WTC11 (cell line): ENCODE measurements at regions of chr2 and their contacts with region 1.

Region 1: GRCh38 chr2:85750587-85751575 is 2.9 kb upstream of the ATOH8 start:
- DNase-seq: peak; percentile 83
- ATAC-seq: peak; percentile 48
- H3K4me3 Mint-ChIP-seq: no peak overlapping the region
- H3K27ac Mint-ChIP-seq: no peak overlapping the region
- H3K4me1 Mint-ChIP-seq: peaks cover 10% of the 10 kb centered on the region
- H3K27me3 Mint-ChIP-seq: peaks cover 53% of the 10 kb centered on the region
- CTCF ChIP-seq: peak; percentile 56

Region 2: GRCh38 chr2:85672456-85672855 is 78.4 kb before region 1 on chr2:
- CTCF ChIA-PET with region 1: no interaction called
- POLR2A ChIA-PET with region 1: no interaction called
- DNase-seq: no peak
- ATAC-seq: no peak
- H3K4me3 Mint-ChIP-seq: no peak overlapping the region
- H3K27ac Mint-ChIP-seq: no peak overlapping the region
- H3K4me1 Mint-ChIP-seq: peaks cover 16% of the 10 kb centered on the region
- H3K27me3 Mint-ChIP-seq: no peaks in the 10 kb centered on the region
- CTCF ChIP-seq: no peak

Region 3: DNA sequence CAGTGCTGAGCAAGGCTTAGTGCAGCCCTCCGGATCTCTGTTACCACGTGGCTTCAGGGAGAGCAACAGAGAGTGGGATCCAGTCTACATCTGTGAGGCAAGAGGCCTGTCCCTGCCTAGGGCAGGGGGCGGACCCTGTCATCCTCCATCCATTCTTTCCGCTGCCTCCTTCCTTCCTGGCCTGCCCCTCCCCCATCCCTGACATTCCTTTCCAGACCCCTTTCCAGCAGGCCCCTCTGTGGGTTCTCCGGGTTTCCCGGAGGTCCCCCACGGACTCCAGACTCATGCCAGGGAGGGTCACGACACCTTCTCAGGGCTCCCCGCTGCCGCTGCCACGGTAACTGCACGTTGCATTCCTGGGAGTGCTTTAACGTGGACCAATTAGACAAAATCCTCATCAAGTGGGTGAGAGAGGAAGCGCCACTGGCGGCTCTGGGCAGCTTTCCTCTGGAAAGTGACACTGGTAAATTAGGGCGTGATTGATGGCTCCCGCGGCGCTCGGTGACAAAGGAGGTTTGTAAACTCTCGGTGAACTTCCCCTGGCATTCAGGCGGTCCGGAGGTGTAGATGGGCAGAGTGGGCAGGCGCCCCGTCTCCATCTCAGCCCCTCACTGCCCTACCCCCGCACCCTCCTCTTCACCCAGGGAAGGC is 14.3 kb after region 1 on chr2:
- CTCF ChIA-PET with region 1: interaction called, 126 read pairs
- POLR2A ChIA-PET with region 1: interaction called, 5 read pairs
- DNase-seq: peak; percentile 63
- ATAC-seq: peak; percentile 52
- H3K4me3 Mint-ChIP-seq: peak overlapping the region; percentile 67
- H3K27ac Mint-ChIP-seq: no peak overlapping the region
- H3K4me1 Mint-ChIP-seq: peaks cover 56% of the 10 kb centered on the region
- H3K27me3 Mint-ChIP-seq: peaks cover 47% of the 10 kb centered on the region
- CTCF ChIP-seq: no peak

Region 4: DNA sequence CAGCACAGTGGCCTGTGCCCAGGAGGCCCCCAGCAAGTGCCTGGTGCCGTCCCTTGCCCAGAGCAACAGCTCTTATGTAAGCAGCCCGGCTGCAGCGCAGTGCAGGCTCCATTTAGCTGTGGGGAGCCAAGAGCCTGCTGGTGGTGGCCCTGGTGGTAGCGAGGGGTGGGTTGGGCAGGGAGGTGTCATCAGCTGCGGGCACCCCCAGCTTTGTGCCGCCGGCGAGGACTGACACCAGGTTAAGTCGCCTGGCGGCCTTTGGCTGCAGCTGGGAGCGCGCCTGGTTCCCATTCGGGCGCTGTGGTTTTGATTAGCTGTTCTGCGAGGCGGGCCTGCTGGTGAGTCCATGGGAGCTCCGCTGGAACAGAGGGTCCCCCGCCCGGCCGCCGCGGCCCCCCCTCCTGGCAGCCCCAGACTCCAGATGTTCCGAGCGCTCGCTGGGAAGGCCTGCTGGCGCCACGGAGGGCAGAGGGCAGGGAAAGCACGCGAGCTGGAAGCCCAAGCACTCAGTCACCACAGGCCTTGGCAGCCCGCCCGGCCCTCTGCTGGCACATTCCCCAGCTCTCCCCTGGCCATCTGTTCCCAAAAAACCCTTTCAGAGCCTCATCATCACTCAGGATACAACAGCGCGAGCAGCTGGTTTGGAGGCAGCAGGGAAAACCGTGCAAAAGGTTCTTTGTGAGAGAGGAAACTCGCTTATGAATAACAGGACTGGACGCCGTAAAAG is 21.3 kb after region 1 on chr2:
- CTCF ChIA-PET with region 1: interaction called, 126 read pairs
- POLR2A ChIA-PET with region 1: interaction called, 3 read pairs
- DNase-seq: peak; percentile 59
- ATAC-seq: peak; percentile 51
- H3K4me3 Mint-ChIP-seq: no peak overlapping the region
- H3K27ac Mint-ChIP-seq: no peak overlapping the region
- H3K4me1 Mint-ChIP-seq: peaks cover 47% of the 10 kb centered on the region
- H3K27me3 Mint-ChIP-seq: peaks cover 26% of the 10 kb centered on the region
- CTCF ChIP-seq: no peak

Region 5: GRCh38 chr2:85797921-85798320 is 47.0 kb after region 1 on chr2:
- CTCF ChIA-PET with region 1: interaction called, 10 read pairs
- POLR2A ChIA-PET with region 1: interaction called, 3 read pairs
- DNase-seq: no peak
- ATAC-seq: peak; percentile 73
- H3K4me3 Mint-ChIP-seq: no peak overlapping the region
- H3K27ac Mint-ChIP-seq: no peak overlapping the region
- H3K4me1 Mint-ChIP-seq: no peaks in the 10 kb centered on the region
- H3K27me3 Mint-ChIP-seq: peaks cover 7% of the 10 kb centered on the region; the same call in 1 of the 2 replicates
- CTCF ChIP-seq: 0 out of 2 replicates have a peak, but pooled peaks have one; percentile 13